Dorsolateral prefrontal cortex (tissue), 120 donors: ENCODE measurements at regions of chr1 and their contacts with region 1.

Region 1: DNA sequence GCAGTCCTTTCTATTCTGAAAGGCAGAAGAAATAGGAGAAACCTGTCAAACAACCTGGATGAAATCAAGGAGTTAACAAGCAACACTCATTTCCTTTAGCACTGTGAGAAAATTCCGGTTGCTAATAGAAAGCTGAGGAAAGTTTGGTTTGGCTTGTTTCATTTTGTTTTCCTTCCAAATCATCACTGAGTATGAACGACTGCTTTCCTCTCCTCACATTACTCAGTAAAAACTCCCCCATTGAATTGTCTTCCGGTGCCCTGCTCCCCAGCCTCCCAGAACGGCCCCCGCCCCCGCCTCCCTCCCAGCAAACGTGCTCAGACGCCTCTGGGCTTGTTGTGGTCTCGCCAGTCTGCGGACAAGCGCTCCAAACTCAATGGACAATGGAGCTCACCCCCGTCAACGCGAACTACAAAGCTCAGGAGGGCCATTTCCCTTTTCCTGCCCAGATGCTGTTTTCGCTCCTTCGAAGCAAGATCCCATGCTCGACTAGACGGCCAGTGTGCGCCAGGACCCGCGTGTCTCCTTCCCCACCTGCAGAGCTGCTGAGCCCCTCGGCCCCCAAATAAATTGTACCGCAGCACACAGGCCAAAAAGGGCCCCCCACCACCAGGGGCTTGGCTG is 747 bp downstream of the STX6 start:
- DNase-seq: peak in 9 of 10 donors; percentile 38 to 73 (median 53)
- H3K4me3 ChIP-seq: peak overlapping the region; percentile 74 to 100 (median 93)
- H3K27ac ChIP-seq: peak overlapping the region; percentile 63 to 96 (median 89)
- H3K27me3 ChIP-seq: no peaks in the 10 kb centered on the region
- CTCF ChIP-seq: peak in 1 of 56 donors; percentile 7

Region 2: DNA sequence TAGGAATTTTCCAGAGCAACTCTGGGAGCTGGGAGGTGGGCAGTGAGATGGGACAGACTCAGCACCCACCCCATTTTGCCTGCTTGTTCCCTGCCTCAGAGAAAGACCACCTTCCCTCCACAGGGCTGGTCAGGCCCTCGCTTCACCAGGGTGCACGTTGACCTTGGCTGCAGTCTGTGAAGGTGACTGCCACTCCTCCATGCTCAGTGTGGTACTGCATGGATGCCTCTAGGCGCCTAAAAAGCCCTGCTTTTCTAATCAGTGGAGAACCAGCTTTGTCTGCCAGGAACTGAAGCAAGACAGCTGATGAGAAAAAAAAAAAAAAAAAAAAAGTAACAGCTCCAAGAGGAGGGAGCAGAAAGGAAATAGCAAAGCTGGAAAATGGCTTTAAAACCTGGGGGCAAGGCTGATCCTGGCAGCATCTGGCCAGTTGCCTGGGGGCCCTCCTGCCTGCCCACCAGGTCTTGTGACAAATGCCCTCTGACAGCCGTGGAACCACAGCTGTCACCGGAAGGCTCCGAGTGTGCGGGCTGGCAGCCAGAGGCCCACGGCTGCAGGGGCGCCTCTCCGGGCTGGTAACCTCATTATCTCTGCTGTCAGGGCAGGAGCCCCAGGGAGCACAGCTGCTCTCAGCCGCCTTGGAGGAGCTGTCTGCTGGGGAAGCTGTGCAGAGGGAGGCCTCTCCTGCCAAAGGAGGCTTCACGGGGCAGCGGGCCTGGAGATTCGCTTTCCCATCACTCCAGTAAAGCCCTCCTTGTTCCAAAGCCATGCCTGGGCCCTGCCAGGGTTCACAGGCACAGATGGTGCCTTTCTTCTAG is 95.5 kb before region 1 on chr1:
- intact Hi-C with region 1: loop called in 1 of 2 experiments (anchors 2 kb)
- DNase-seq: peak; percentile 51 to 83 (median 70)
- H3K4me3 ChIP-seq: peak overlapping the region in 39 of 59 donors; percentile 0 to 47 (median 24)
- H3K27ac ChIP-seq: peak overlapping the region; percentile 86 to 99 (median 97)
- H3K27me3 ChIP-seq: no peaks in the 10 kb centered on the region
- CTCF ChIP-seq: peak in 7 of 56 donors; percentile 8 to 29 (median 14)

Region 3: DNA sequence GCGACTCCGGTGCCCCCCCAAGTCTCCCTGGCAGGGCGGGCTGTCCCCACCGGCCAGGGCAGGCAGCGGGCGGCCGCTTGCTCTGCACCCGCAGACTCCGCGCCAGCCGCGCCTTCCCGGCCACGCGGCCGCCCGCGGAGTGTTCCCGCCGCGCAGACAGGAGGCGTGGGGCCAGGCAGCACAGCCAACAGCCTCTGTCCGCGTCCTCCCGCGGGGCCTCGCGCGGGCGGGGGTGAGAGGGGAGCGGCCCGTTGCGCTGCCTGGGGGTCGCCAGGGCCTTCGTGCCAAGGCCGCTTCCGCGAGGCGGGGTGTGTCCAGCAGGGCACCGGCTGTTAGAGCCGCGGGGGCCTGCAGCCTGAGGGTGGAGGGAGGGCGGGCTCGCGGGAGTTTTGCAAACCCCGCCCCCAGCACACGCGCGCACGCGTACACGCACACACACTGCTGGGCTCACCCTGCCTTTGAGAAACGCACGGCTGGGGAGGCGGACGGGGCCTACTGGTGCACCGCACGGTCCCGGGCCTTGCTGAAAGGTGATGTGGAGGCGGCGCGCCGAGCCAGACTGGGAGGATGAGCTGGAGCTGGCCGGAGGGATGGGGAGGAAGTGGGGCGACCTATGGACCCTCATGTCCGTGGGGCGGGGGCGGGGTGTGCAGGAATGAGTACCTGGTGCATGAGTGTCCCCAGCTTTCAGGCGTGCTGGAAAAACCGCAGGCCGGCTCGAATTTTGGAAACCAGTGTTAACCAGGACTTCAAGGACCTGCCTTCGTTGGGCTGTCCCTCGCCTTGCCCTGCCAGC is 67.7 kb before region 1 on chr1:
- intact Hi-C with region 1: loop called (anchors 1 to 5 kb)
- DNase-seq: peak in 9 of 10 donors; percentile 54 to 84 (median 69)
- H3K4me3 ChIP-seq: peak overlapping the region; percentile 35 to 74 (median 63)
- H3K27ac ChIP-seq: peak overlapping the region; percentile 28 to 93 (median 78)
- H3K27me3 ChIP-seq: no peaks in the 10 kb centered on the region
- CTCF ChIP-seq: peak in 36 of 56 donors; percentile 4 to 54 (median 30)

Region 4: DNA sequence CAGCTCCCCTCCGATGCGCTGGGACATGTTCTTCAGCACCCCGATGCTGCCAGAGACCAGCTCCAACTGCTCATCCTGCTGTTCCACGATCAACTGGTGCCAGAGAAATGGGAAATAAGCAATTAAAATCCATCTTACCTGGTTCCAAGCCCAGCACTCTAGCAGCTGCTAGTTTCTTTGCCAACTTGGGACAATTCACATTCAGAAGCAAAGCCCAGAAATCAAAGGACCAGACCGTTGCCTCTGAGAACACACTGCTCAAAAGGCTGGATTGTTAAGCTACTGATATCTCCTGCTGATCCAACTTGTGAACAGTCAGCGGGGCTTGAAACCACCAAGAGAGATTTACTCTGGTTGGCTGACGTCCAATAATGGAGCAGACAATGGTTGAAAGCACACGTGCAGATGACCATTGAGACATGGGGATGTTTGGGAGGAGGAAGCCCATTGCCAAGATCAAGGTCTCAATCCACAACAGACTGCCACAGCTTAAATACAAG is 33.6 kb before region 1 on chr1:
- intact Hi-C with region 1: loop called in 1 of 2 experiments (anchors 5 kb)
- DNase-seq: peak in 1 of 10 donors; percentile 71
- H3K4me3 ChIP-seq: peak overlapping the region in 1 of 59 donors; percentile 12
- H3K27ac ChIP-seq: peak overlapping the region in 39 of 59 donors; percentile 2 to 84 (median 49)
- H3K27me3 ChIP-seq: no peaks in the 10 kb centered on the region
- CTCF ChIP-seq: peak in 1 of 56 donors; percentile 21

Region 5: DNA sequence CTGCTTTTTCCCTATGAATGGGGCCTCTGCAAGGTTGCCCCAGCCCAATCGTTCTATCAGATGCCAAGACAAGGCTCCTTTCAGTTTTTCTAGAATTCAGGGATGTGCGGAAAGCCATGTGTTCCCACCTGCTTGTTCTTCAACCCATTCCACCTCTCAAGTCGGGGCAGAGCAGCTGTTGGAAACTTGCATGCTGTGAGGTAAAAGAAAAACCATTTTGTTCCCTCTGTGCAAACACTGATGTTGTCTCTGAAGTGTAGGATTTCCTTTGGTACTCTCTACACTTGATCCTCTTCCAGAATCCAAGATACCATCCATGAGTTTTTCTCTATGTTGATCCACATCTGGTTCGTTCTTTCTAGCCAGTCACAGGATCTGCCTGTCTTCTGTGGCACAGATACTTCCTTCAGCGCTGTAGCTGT is 73.9 kb after region 1 on chr1:
- intact Hi-C with region 1: no loop called
- DNase-seq: no peak
- H3K4me3 ChIP-seq: peak overlapping the region in 3 of 59 donors; percentile 2 to 10 (median 5)
- H3K27ac ChIP-seq: peak overlapping the region in 48 of 59 donors; percentile 10 to 78 (median 56)
- H3K27me3 ChIP-seq: no peaks in the 10 kb centered on the region
- CTCF ChIP-seq: no peak

Region 6: DNA sequence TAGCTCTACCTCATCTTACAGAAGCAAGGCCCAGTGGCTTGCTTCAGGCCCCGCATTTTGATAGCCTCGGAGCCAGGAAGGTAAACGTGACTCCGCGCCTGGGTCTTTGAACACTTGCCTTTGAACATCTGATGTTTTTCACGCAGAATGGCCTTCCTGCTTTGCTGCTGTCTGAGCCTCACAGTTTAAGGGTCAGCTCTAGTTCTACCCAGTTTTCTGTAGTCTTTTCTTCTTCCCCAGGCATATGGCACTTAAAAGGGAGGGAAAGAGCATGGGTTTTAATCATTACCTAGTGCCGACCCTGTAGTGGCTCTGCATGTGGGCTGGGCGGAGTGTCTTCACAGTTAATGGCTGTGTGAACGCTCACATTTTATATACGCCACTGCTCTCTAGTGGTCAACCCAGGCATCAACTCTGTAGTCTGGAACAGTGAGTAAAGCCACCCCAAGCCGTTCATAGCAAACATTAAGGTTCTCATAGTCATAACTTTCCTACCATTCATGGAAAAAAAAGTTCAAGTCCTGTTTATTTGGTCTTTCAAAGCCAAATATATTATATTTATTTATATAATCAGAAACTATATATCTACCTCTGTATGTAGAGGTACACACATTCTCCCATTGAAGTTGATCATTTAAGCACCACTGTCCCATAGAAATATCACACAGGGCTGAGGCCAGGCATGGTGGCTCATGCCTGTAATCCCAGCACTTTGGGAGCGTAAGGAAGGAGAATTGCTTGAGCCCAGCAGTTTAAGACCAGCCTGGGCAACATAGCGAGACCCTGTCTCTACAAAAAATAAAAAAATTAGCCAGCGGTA is 144.7 kb after region 1 on chr1:
- intact Hi-C with region 1: no loop called
- DNase-seq: peak in 8 of 10 donors; percentile 57 to 87 (median 65)
- H3K4me3 ChIP-seq: peak overlapping the region in 3 of 59 donors; percentile 3 to 22 (median 21)
- H3K27ac ChIP-seq: peak overlapping the region in 1 of 59 donors; percentile 13
- H3K27me3 ChIP-seq: no peaks in the 10 kb centered on the region
- CTCF ChIP-seq: peak; percentile 54 to 94 (median 87)